Heart left ventricle (tissue), 16 donors: ENCODE measurements at regions of chr6 and their contacts with region 1.

Region 1: DNA sequence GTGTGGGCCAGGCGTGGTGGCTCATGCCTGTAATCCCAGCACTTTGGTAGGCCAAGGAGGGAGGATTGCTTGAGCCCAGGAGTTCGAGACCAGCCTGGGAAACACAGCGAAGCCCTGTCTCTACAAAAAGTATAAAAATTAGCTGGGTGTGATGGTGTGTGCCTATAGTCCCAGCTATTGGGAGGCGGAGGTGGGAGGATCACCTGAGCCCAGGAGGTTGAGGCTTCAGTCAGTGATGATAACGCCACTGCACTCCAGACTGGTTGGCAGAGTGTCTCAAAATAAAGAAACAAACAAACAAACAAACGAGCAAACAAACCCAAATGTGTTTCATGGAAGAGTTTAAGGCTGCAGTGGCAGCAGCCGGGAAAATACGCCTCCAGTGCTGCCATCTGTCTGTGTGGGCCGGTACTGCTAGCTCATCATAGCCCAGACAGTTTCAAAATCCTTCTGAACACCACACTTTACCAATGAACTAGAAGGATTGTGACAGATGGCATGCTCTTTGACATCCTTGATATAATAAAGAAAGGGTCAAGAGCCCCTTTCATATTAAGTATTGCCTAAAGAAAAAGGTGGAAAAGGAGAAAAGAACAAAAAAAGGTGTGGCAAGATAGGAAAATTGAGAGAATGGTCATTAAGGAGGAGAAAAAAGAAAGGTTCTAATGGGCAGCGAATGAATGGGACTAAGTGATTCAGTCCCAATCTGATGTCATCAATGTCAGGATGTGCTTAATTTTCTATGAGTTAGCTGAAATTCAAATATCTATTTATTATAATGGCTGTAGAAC is 298.6 kb downstream of the SYNE1 start:
- DNase-seq: peak in 4 of 5 donors; percentile 38 to 68 (median 44)
- ATAC-seq: peak in 3 of 4 donors; percentile 67 to 83 (median 80)
- H3K4me3 ChIP-seq: no peak overlapping the region
- H3K27ac ChIP-seq: no peak overlapping the region
- H3K4me1 ChIP-seq: peaks cover 0 to 6% (median 0%) of the 10 kb centered on the region in 12 donors
- H3K27me3 ChIP-seq: no peaks in the 10 kb centered on the region
- CTCF ChIP-seq: peak; percentile 77 to 96 (median 90)
- POLR2A ChIP-seq: no peak

Region 2: DNA sequence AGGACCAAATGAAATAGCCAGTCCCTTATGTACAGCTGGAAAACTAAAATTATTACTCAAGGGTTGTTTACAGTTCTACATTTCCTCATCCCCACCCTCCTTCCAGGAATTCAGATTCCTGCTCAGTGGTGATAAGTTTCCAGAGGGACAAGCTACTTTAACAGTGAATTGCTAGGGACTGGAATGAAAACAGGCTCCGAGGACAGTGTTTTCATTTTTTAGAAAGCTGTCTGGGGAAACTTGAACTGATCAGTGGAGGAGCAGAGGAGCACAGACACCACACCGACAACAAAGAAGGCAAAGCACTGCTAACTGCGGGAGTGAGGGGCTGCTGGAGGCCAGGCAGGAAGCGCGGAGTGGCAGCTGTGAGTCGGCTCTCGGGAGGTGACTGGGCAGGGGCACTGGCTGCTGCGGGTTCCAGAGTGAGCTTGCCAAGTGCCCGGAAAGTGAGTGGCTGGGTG is 208.8 kb before region 1 on chr6:
- intact Hi-C with region 1: loop called in 1 of 10 experiments (anchors 10 kb)
- DNase-seq: peak in 1 of 5 donors; percentile 29
- ATAC-seq: peak; percentile 58 to 81 (median 80)
- H3K4me3 ChIP-seq: peak overlapping the region in 10 of 12 donors; percentile 1 to 53 (median 41)
- H3K27ac ChIP-seq: peak overlapping the region; percentile 52 to 82 (median 72)
- H3K4me1 ChIP-seq: peaks cover 0 to 48% (median 19%) of the 10 kb centered on the region in 12 donors
- H3K27me3 ChIP-seq: no peaks in the 10 kb centered on the region
- CTCF ChIP-seq: no peak
- POLR2A ChIP-seq: no peak

Region 3: GRCh38 chr6:152206072-152206818 is 132.3 kb before region 1 on chr6:
- intact Hi-C with region 1: loop called in 1 of 10 experiments (anchors 10 kb)
- DNase-seq: no peak
- ATAC-seq: no peak
- H3K4me3 ChIP-seq: no peak overlapping the region
- H3K27ac ChIP-seq: no peak overlapping the region
- H3K4me1 ChIP-seq: no peaks in the 10 kb centered on the region
- H3K27me3 ChIP-seq: no peaks in the 10 kb centered on the region
- CTCF ChIP-seq: peak in 11 of 12 donors; percentile 20 to 53 (median 44)
- POLR2A ChIP-seq: no peak

Region 4: DNA sequence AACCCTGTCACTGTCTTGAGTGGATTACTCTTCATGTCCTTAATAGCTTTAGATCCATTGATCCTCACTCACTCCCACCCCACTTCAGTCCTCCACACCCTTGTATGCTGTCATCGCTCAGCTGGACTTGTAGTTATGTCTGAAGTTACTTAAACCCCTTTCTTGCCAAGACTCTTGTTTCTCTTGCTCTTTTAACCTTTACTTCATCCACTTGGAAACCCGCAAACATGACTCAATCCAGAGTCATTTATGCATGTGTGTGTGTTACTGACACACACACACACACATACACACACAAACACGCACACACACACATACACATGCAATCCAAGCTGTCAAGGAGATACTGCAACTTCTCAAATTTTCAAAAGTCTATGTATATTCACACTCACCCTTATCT is 43.2 kb before region 1 on chr6:
- intact Hi-C with region 1: loop called in 4 of 10 experiments (anchors 5 kb)
- DNase-seq: no peak
- ATAC-seq: peak in 3 of 4 donors; percentile 29 to 59 (median 52)
- H3K4me3 ChIP-seq: no peak overlapping the region
- H3K27ac ChIP-seq: peak overlapping the region in 1 of 12 donors; percentile 40
- H3K4me1 ChIP-seq: peaks cover 0 to 46% (median 23%) of the 10 kb centered on the region in 12 donors
- H3K27me3 ChIP-seq: no peaks in the 10 kb centered on the region
- CTCF ChIP-seq: no peak
- POLR2A ChIP-seq: no peak

Region 5: DNA sequence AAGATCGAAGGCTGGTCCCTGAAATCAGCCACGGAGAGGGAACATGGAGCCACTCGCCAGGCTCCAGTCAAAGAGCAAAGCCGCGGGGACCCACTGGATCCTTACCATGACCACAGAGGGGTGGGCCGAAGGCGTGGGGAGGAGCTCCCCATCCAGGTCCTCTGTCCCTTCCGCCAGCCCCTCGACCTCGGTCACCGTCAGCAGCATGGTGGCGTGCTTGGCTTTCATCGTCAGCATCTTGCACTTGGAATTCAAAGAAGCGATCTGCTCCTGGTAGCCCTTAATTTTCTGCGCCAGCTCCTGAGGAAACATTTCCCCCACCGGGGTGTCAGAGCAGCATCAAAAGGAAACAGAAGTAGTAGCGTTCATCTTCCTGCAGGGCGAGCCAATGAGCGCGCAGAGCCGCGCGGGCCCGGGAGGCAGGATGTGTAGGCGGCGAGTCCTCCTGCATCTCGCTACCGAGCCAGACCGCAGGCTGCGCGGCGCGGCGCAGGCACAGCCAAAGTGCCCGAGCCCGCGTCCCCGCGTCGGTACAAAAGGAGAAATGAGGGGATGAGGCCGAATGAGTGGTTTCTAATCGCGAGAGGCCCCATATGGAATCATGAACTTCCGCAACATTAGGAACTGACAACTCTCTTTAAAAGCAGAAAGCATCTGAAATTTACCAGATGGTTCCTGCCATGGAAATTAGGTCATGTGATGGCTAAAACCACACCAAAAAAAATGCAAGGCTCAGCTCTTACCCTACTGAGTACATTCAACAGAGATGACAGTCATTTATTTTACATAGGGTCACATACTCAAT is 36.6 kb before region 1 on chr6:
- intact Hi-C with region 1: loop called in 5 of 10 experiments (anchors 2 to 5 kb)
- DNase-seq: peak; percentile 87 to 94 (median 90)
- ATAC-seq: peak; percentile 92 to 98 (median 97)
- H3K4me3 ChIP-seq: peak overlapping the region; percentile 27 to 72 (median 56)
- H3K27ac ChIP-seq: peak overlapping the region; percentile 37 to 95 (median 81)
- H3K4me1 ChIP-seq: peaks cover 0 to 45% (median 13%) of the 10 kb centered on the region in 12 donors
- H3K27me3 ChIP-seq: no peaks in the 10 kb centered on the region
- CTCF ChIP-seq: peak; percentile 46 to 83 (median 64)
- POLR2A ChIP-seq: peak in 1 of 2 donors; percentile 30